ENCODE measurements at regions of chr2 and their contacts with region 1.

Region 1: GRCh38 chr2:145085612-145086011 is 565.7 kb upstream of the ZEB2 start:
- DNase-seq: no peak
- ATAC-seq: no peak
- H3K4me3 ChIP-seq: no peak overlapping the region
- H3K27ac ChIP-seq: no peak overlapping the region
- H3K4me1 ChIP-seq: no peaks in the 10 kb centered on the region
- H3K27me3 ChIP-seq: no peaks in the 10 kb centered on the region
- CTCF ChIP-seq: no peak
- POLR2A ChIP-seq: no peak
- RAD21 ChIP-seq: no peak

Region 2: DNA sequence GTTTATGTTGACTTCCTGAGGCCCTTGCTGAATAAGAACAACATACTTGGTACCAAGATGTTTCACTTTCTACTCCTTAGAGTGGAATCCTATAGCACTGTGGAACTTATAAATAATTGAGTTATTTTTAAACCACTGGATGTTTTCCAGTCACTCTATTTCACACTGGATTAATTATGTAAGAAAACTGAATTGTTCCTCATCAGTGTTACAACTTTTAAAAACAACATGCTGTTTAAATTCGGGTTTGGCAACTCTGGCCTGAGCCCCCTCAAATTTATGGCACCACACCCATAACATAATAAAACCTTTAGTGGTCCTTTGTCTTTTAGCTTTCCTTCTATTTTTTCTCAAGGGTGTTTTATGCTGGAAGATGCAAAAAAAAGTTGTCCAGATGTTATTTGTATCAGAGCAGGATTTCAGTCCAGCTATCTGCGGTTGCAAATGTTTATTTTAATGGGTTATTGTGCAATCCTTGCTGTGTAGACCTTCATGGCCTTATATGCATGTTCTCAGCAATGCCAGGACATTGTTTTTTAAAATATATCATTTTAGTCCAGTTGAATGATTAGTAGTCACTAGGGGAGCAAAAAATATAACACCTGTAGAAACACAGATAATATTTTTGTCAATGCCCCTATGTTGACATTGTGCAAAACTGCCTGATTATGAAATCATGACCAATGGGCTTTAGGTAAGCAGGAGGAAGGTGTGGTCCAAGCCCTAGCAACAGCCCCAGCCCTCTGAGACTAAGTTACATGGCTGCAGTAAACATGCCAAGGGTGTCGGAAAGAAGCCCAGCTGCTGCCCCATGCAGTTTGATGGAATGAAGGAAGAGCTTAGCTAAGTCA is 72.4 kb after region 1 on chr2:
- CTCF ChIA-PET with region 1: no interaction called
- POLR2A ChIA-PET with region 1: no interaction called
- RAD21 ChIA-PET with region 1: no interaction called
- intact Hi-C with region 1: loop called (anchors 2 kb)
- DNase-seq: no peak
- ATAC-seq: no peak
- H3K4me3 ChIP-seq: no peak overlapping the region
- H3K27ac ChIP-seq: no peak overlapping the region
- H3K4me1 ChIP-seq: no peaks in the 10 kb centered on the region
- H3K27me3 ChIP-seq: no peaks in the 10 kb centered on the region
- CTCF ChIP-seq: no peak
- POLR2A ChIP-seq: no peak
- RAD21 ChIP-seq: no peak

Measured in HCT116 (cell line).